HEK293 (cell line): ENCODE measurements at regions of chr2 and their contacts with region 1.

Region 1: DNA sequence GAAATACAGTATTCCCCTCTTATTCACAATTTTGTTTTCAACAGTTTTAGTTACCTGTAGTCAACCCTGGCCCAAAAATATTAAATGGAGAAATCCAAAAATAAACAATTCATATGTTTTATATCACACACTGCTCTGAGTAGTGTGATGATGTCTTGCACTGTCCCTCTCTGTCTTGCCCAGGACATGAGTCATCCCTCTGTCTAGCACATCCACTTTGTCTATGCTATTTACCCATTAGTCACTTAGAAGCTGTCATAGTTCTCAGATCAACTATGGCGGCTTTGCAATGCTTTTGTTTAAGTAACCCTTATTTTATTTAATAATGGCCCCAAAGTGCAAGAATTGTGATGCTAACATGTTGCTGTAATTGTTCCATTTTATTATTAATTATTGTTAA is 380.6 kb upstream of the REG3G start:
- H3K4me3 ChIP-seq: no peak overlapping the region
- H3K27ac ChIP-seq: no peak overlapping the region
- H3K4me1 ChIP-seq: no peaks in the 10 kb centered on the region
- CTCF ChIP-seq: no peak

Region 2: GRCh38 chr2:78676921-78677696 is 32.3 kb after region 1 on chr2:
- CTCF ChIA-PET with region 1: interaction called, 10 read pairs
- POLR2A ChIA-PET with region 1: no interaction called
- H3K4me3 ChIP-seq: no peak overlapping the region
- H3K27ac ChIP-seq: no peak overlapping the region
- H3K4me1 ChIP-seq: no peaks in the 10 kb centered on the region
- CTCF ChIP-seq: no peak